Esophagus squamous epithelium (tissue), 5 donors: ENCODE measurements at regions of chr4 and their contacts with region 1.

Region 1: GRCh38 chr4:145732895-145733880 is 53.2 kb downstream of the C4orf51 start:
- DNase-seq: peak; percentile 35
- H3K4me3 ChIP-seq: peak overlapping the region; percentile 55 to 81 (median 67)
- H3K27ac ChIP-seq: peak overlapping the region; percentile 98 to 99 (median 98)
- H3K4me1 ChIP-seq: peaks cover 11 to 59% (median 35%) of the 10 kb centered on the region in 3 donors
- H3K27me3 ChIP-seq: no peaks in the 10 kb centered on the region
- CTCF ChIP-seq: peak in 1 of 6 experiments; percentile 19
- POLR2A ChIP-seq: peak in 3 of 4 donors; percentile 5 to 89 (median 54)

Region 2: DNA sequence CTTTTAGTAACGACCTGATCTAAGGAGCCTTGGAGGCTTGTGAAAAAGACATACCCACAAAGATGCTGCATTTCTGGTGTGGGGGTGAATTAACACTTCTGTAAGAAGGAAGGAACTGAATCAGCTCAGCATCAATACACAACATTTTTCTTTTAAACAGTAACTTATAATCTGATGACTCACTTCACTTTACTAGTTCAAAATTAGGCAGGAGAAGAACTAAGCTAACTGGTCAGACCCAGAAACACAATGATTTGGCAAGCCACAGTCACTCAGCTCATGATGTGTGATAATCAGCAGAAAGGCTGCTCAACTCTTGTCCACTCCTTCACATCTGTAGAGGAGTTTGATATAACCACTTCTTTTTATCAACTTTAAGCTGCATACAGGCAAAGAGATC is 109.4 kb before region 1 on chr4:
- intact Hi-C with region 1: loop called (anchors 5 kb)
- DNase-seq: no peak
- H3K4me3 ChIP-seq: no peak overlapping the region
- H3K27ac ChIP-seq: peak overlapping the region in 1 of 4 donors; percentile 17
- H3K4me1 ChIP-seq: peaks cover 5 to 35% (median 6%) of the 10 kb centered on the region in 3 donors
- H3K27me3 ChIP-seq: no peaks in the 10 kb centered on the region
- CTCF ChIP-seq: no peak
- POLR2A ChIP-seq: no peak